CD4-positive, alpha-beta T cell (primary cell): ENCODE measurements at regions of chr1 and their contacts with region 1.

Region 1: GRCh38 chr1:100474834-100475233 is 63.1 kb upstream of the GPR88 start:
- DNase-seq: no peak
- ATAC-seq: no peak
- H3K4me3 ChIP-seq: no peak overlapping the region
- H3K4me3 Mint-ChIP-seq: no peak overlapping the region
- H3K27ac ChIP-seq: no peak overlapping the region
- H3K27ac Mint-ChIP-seq: peak overlapping the region; percentile 24
- H3K4me1 ChIP-seq: peaks cover 5% of the 10 kb centered on the region
- H3K4me1 Mint-ChIP-seq: peaks cover 54% of the 10 kb centered on the region
- H3K27me3 ChIP-seq: no peaks in the 10 kb centered on the region
- H3K27me3 Mint-ChIP-seq: no peaks in the 10 kb centered on the region
- CTCF ChIP-seq: no peak

Region 2: GRCh38 chr1:100219883-100220282 is 255.0 kb before region 1 on chr1:
- CTCF ChIA-PET with region 1: no interaction called
- POLR2A ChIA-PET with region 1: no interaction called
- intact Hi-C with region 1: loop called in 1 of 2 experiments (anchors 5 kb)
- DNase-seq: no peak
- ATAC-seq: no peak
- H3K4me3 ChIP-seq: no peak overlapping the region
- H3K4me3 Mint-ChIP-seq: no peak overlapping the region
- H3K27ac ChIP-seq: no peak overlapping the region
- H3K27ac Mint-ChIP-seq: no peak overlapping the region
- H3K4me1 ChIP-seq: no peaks in the 10 kb centered on the region
- H3K4me1 Mint-ChIP-seq: no peaks in the 10 kb centered on the region
- H3K27me3 ChIP-seq: no peaks in the 10 kb centered on the region
- H3K27me3 Mint-ChIP-seq: no peaks in the 10 kb centered on the region
- CTCF ChIP-seq: no peak